Activated CD4-positive, alpha-beta T cell treated with anti-CD3 and anti-CD28 coated beads for 36 hours (primary cell): ENCODE measurements at regions of chr22 and their contacts with region 1.

Region 1: DNA sequence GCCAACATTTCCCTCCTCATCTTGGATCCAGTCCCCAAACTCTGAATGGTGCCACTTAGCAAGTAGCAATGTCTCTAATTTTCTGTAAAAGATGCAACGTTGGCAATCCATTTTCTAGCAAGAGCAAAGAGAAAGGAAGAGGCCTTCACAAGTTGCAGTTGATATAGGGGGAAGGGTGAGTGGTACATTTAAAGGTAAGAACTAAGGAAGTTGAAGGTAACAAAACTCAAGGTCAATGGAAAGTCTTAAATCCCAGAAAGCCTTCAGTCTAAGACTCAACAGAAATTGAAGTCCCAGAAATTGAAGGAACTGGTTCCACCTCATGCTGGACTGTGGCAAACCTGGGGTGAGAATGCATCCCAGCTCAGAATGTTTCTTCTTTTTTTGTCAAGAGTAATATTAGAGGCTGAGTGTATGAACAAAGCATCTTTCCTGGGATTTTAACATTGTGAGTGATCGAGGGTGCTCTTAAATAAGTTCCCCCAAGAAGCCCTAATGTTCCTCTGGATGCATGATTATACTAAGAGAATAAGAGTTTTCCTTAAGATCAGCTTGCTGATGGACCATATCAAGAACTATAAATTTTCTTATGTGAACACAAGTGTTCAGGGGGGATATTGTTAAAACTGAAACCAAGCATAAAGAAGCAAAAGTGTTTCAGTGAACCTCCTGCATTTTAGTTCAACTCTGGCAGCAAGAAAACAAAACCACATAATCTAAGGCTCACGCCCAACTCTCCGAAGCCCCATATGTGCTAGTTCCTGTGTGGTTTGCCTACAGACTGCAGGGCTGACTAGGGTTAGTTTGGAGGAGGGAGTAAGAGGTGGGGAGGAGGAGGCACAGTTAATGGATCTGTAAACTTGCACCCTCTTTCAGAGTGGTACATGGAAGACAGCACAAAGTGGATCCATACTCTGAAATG is at the start of gene GRAP2:
- DNase-seq: peak; percentile 77
- ATAC-seq: peak; percentile 89
- H3K4me3 Mint-ChIP-seq: peak within 1 kb of the TSS; percentile 86
- H3K27ac Mint-ChIP-seq: peak within 1 kb of the TSS; percentile 100
- H3K4me1 Mint-ChIP-seq: peaks cover 20% of the 10 kb centered on the region
- H3K27me3 Mint-ChIP-seq: no peaks in the 10 kb centered on the region
- total RNA-seq, gene GRAP2: 40.6 to 45.5 TPM

Region 2: DNA sequence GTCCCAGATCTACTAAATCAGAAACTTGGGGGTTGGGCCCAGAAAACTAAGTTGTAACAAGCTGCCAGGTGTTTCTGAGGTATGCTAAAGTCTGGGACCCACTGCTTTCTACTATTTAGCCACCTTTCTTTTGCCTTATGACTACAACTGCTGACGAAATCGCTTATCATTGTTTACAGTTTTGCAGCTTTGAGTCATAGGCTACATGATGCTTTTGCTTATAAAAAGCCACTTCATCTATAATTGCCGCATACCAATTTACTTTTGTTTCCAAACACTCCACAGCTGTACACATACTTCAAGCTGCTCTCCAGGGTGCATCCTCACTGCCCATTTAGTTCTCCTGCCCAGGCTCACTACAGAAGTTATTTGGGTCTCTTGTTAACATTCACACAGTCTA is 151.7 kb before region 1 on chr22:
- CTCF ChIA-PET with region 1: interaction called, 3 read pairs
- POLR2A ChIA-PET with region 1: no interaction called
- intact Hi-C with region 1: loop called in 1 of 2 experiments (anchors 10 kb)
- DNase-seq: no peak
- ATAC-seq: no peak
- H3K4me3 Mint-ChIP-seq: no peak overlapping the region
- H3K27ac Mint-ChIP-seq: no peak overlapping the region
- H3K4me1 Mint-ChIP-seq: peaks cover 36% of the 10 kb centered on the region
- H3K27me3 Mint-ChIP-seq: no peaks in the 10 kb centered on the region

Region 3: GRCh38 chr22:39839917-39840510 is 60.6 kb before region 1 on chr22:
- CTCF ChIA-PET with region 1: no interaction called
- POLR2A ChIA-PET with region 1: no interaction called
- intact Hi-C with region 1: loop called in 1 of 2 experiments (anchors 2 kb)
- DNase-seq: peak; percentile 64
- ATAC-seq: peak; percentile 100
- H3K4me3 Mint-ChIP-seq: no peak overlapping the region
- H3K27ac Mint-ChIP-seq: no peak overlapping the region
- H3K4me1 Mint-ChIP-seq: peaks cover 16% of the 10 kb centered on the region
- H3K27me3 Mint-ChIP-seq: peaks cover 2% of the 10 kb centered on the region

Region 4: GRCh38 chr22:39960791-39961746 is 60.5 kb after region 1 on chr22:
- CTCF ChIA-PET with region 1: no interaction called
- POLR2A ChIA-PET with region 1: no interaction called
- intact Hi-C with region 1: loop called in 1 of 2 experiments (anchors 2 kb)
- DNase-seq: peak; percentile 85
- ATAC-seq: peak; percentile 95
- H3K4me3 Mint-ChIP-seq: peak overlapping the region; percentile 27
- H3K27ac Mint-ChIP-seq: peak overlapping the region; percentile 78
- H3K4me1 Mint-ChIP-seq: peaks cover 65% of the 10 kb centered on the region
- H3K27me3 Mint-ChIP-seq: no peaks in the 10 kb centered on the region

Region 5: DNA sequence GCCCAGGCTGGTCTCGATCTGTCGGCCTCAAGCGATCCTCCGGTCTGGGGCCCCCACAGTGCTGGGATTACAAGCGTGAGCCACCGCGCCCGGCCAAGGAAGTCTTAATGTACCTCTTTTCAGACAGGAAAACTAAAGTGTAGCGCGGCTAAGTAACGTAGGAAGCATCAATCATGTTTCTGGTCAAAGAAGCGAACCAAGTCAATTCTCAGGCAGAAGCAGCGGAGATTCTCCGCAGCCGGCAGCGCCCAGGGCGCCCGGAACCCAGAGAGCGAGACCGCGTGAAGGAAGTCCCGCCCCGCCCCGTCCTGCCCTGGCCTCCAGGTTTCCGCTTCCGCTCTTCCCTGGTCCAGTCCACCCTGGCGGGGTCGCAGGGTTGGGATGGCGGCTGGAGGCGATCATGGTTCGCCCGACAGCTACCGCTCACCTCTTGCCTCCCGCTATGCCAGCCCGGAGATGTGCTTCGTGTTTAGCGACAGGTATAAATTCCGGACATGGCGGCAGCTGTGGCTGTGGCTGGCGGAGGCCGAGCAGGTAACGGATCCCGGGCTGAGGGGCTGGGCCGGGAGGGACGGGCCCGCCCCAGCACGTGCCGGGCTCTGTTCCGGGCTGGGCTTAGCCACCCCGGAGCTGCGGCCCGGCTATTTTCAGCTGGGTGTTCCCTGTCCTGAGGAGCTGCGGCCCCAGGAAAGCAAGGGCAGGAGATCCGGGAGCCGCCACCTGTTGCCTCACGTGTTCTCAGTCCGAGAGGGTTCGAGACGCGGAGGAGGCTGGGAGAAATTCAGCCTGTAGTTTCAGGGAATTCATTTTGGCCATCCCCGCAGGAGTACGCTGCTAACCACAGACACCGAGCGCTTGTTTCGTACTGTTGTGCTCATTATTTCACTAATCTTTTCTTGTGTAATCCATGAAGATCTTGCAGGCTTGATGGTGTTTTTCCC is 445.9 kb after region 1 on chr22 and contains the start of gene ADSL:
- CTCF ChIA-PET with region 1: no interaction called
- POLR2A ChIA-PET with region 1: no interaction called
- intact Hi-C with region 1: no loop called
- DNase-seq: peak; percentile 94
- ATAC-seq: peak; percentile 87
- H3K4me3 Mint-ChIP-seq: peak within 1 kb of the TSS; percentile 86
- H3K27ac Mint-ChIP-seq: peak within 1 kb of the TSS; percentile 92
- H3K4me1 Mint-ChIP-seq: peaks cover 45% of the 10 kb centered on the region
- H3K27me3 Mint-ChIP-seq: no peaks in the 10 kb centered on the region
- total RNA-seq, gene ADSL: 125 to 172 TPM